HEK293T (cell line): ENCODE measurements at regions of chr20 and their contacts with region 1.

Region 1: DNA sequence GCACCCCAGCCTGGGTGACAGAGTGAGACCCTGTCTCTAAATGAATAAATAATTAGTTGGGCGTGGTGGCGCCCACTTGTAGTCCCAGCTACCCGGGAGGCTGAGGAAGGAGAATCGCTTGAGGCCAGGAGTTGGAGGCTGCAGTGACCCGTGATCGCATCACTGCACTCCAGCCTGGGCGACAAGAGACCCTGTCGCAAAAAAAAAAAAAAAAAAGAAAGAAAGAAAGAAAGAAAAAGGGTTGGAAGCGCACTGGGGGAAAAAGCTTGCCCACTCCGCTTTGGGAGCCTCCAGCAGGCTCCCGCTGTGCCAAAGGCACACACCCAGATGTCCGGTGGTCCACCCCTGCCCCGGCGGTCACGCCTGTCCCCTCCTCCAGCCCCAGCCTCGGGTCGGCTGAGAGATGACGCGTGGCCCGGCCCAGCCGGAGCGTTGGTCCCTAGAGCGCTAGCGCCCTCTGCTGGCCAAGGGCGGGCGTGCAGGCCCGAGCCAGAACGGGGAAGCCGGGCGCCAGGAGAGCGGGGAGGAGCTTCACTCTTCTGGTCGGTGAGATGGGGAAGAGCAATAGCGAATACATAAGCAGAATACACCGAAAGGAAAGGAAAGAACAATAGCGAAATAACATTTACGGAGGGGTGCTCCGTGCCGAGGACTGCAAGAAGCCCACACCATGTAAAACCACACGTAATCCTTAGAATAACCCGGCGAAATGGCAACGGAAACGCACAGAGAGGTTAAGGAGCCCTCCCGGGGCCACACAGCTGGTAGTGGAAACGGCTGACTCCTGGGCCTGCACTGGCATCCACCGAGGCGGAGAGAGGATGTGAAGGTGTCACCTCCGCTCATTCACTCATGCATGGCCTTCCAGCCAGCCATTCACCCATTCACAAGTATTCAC is 41.7 kb downstream of the UBE2V1 start:
- DNase-seq: peak; percentile 94

Region 2: DNA sequence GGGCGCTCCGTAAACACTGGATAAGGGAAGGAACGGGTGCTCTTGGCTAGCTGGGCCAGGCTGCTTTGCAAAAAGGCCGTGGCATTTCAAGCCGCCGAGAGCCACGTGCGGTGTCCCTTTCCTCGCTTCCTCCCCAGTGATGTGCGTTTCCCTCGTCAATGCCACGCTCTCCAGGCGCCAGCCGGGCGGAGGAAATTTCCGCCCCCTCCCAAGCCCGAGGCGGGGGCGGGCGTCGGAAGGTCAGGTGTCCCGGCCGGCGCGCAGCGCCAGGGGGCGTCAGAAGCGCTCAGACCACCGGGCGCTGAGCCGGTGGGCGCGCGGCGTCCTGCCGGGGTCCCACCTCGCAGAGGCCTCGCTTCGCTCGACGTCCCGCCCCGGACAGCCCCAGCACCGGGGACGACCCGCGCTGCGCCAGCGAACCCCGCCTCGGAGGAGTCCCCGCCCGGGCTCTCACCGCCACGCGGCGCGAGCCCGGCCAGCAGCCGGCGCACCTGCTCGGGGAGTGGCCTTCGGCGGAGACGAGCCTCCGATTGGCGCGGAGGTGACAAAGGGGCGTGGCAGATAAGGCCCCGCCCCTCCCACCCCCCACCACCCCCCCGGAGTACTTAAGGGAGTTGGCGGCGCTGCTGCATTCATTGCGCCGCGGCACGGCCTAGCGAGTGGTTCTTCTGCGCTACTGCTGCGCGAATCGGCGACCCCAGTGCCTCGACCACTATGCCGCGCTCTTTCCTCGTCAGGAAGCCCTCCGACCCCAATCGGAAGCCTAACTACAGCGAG is 88.7 kb before region 1 on chr20 and contains the start of gene SNAI1:
- CTCF ChIA-PET with region 1: interaction called, 78 read pairs
- POLR2A ChIA-PET with region 1: interaction called, 6 read pairs
- DNase-seq: peak; percentile 98

Region 3: DNA sequence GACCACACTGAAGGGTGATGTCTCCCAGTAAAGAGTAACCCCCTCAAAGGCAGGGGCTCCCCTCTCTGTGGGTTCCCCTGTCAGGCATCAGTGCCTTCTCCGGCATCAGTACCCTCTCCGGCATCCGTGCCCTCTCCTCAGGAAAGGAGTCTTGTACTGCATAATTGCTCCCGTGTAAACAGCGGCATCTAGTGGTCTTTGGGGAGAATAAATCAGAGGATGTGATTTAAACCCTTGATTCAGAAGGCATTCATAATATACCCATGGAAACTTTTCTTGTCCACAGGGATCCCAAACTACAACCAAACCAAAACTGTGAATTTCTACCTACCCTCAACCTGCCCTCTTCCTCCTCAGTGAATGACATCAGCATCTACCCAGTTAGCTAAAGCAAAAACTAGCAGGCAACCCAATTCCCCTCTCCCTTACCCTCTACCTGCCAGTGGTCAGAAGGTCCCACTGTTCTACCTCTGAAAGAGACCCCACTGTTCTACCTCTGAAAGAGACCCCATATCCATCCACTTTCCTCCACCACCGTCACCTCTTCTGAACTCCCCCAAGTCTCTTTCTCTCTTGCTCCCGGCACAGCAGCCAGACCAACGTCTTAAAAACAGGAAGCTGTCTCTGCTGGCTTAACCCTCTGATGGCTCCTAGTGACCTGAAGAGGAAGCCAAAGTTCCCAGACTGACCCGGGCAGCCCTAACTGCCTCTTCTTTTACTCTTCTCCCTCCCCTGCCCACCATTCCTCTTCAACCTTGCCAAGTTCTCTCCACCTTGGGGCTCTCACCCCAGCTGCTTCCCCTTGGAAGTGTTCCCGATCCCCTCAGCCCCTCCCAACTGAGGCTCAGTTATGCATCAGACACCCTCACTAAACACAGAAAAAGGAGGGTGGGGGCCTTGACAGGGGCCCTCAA is 14.5 kb after region 1 on chr20:
- CTCF ChIA-PET with region 1: interaction called, 15 read pairs
- POLR2A ChIA-PET with region 1: no interaction called
- DNase-seq: peak; percentile 77

Region 4: DNA sequence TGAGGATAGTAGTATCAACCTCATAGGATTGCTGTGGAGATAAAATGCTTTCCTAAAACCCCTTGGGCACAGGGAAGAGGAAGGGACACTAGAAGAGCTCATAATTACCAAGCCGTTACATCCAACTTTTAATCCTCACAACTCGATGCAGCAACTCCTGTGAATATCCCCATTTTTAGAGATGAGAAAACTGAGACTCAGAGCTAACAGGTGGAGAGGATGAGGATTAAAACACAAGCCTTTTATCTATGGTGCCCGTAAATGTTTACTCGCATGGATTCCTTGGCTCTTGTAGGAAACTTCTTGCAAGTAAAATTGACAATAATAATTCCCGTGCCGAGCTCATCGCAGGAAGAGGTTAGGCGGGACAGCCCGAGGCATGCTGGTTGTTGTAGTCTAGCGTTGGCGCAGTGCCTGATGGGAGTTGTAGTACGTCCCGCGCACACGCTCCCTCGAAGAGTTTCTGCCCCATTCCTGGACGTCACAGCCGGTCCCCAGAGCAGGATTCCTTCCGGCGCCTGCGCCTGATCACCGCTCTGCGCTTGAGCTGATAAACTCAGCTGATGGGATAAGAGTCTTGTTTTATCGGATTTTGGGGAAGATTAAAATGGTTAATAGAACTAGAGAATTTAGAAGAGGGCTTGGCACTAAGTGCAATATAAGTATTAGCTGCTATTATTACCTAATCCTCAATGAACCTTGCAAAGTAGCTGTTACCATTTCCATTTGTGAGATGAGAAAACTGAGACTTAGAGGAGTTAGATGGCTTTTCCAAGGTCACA is 44.5 kb after region 1 on chr20:
- CTCF ChIA-PET with region 1: interaction called, 4 read pairs
- POLR2A ChIA-PET with region 1: interaction called, 13 read pairs
- DNase-seq: peak; percentile 91

Region 5: GRCh38 chr20:50138479-50139393 is 67.5 kb after region 1 on chr20:
- CTCF ChIA-PET with region 1: no interaction called
- POLR2A ChIA-PET with region 1: no interaction called
- DNase-seq: no peak

Region 6: DNA sequence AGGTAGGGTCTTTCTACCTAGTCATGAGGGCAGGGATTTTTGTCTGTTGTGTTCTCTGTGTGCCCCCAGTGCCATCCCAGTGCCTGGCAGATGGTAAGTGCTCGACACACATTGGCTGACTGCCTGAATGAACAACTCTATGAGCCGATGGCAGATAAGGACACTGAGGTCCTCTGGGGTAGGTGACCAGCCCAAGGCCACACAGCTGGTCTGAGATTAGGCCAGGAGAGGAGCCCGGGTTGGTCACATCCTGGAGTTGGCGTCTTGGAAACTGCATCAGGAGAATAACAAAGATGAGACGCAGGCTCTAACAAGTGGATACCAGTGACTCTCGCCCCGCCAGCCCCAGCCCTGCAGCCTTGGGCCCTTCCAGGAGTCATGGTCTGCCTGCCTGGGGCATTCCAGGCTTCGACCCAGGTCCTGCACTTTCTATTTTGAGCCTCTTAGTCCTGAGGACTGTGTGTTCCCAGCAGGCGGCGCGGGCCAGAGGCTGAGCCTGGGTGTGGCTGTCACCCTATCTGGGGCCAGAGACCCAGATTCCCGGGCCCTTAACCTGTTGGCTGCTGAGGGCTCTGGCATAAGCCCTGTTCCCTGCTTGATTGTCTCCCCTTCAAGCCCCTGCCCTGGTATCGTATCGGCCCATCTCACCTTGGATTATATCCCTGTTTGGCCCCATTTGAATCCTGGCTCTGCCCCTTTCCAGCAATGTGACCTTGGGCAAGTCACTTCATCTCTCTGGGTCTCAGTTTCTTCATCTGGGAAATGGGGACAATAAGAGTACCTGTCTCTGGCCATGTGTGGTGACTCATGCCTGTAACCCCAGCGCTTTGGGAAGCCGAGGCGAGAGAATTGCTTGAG is 207.7 kb after region 1 on chr20:
- CTCF ChIA-PET with region 1: no interaction called
- POLR2A ChIA-PET with region 1: no interaction called
- DNase-seq: peak; percentile 27

Region 7: DNA sequence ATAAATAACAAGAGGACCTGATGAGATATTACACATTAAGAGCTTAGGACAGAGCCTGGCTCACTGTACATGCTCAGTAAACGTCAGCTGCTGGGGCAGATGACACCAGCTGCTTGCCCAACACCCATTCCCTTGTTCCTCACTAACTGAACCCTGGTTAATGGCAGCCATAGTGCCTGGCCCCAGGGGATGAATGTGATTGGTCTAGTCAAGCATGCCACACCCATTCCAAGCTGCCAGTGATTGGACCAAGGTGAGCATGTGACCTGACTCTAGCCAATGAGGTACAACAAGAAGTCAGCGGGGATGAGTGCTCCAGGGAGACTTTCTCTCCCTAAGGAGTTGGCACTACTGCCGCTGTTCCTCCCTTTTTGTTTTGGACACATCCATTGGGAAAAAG is 353.8 kb after region 1 on chr20:
- CTCF ChIA-PET with region 1: no interaction called
- POLR2A ChIA-PET with region 1: no interaction called
- DNase-seq: peak; percentile 39